Right cardiac atrium (tissue), 5 donors: ENCODE measurements at regions of chr2 and their contacts with region 1.

Region 1: DNA sequence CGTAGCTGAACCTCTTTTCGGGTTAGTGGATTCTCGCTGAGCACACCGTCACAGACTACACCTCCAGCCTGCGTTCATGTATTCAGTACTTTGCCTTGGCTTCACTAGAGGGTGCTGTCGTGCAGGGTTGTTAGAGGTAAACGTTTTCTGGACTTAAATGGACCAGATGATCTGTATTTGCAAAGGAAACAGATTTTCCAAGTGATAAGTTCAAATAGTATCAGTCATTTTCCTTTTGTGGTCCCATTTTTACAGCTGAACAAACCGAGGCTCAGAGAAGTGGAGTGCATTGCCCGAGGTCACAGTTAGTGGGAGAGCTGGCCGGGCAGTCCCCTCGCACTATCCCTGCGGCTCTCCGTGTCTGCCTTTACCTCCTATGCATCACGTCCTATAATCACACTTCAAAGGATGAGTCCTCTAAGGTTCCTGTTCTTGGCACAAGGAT is 125.9 kb downstream of the MAP4K4 start:
- DNase-seq: peak in 2 of 3 donors; percentile 47 to 57
- ATAC-seq: peak; percentile 65 to 70
- H3K4me3 ChIP-seq: no peak overlapping the region
- H3K27ac ChIP-seq: no peak overlapping the region
- H3K4me1 ChIP-seq: peaks cover 9% of the 10 kb centered on the region
- H3K27me3 ChIP-seq: no peaks in the 10 kb centered on the region

Region 2: DNA sequence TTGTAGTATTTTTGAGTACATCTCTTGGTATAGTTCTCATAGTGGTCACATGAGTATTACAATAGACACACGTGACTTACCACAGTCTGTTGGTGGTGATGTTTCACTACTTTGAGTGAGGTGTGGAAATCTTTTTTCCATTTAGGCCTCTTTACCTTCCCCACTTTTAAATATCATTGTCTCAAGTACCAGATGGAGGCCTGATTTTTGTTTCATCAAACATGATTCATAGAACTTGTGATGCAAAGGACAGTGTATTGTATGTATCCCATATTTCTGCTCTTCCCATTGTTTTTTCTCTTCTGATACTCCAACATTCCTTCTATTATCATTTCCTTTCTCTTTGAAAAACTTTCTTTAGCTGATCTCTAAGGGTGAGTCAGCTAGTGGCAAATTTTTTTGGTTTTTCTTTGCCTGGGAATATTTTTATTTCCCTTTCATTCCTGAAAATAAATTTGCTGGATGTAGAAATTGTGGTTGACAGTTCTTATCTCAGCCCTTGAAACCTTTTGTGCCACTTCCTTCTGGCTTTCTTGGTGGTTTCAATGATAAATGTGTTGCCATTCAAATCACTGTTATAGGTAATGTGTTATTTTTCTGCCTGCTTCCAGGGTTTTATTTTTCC is 381.2 kb before region 1 on chr2:
- intact Hi-C with region 1: no loop called
- DNase-seq: no peak
- ATAC-seq: no peak
- H3K4me3 ChIP-seq: no peak overlapping the region
- H3K27ac ChIP-seq: no peak overlapping the region
- H3K4me1 ChIP-seq: no peaks in the 10 kb centered on the region
- H3K27me3 ChIP-seq: no peaks in the 10 kb centered on the region

Region 3: DNA sequence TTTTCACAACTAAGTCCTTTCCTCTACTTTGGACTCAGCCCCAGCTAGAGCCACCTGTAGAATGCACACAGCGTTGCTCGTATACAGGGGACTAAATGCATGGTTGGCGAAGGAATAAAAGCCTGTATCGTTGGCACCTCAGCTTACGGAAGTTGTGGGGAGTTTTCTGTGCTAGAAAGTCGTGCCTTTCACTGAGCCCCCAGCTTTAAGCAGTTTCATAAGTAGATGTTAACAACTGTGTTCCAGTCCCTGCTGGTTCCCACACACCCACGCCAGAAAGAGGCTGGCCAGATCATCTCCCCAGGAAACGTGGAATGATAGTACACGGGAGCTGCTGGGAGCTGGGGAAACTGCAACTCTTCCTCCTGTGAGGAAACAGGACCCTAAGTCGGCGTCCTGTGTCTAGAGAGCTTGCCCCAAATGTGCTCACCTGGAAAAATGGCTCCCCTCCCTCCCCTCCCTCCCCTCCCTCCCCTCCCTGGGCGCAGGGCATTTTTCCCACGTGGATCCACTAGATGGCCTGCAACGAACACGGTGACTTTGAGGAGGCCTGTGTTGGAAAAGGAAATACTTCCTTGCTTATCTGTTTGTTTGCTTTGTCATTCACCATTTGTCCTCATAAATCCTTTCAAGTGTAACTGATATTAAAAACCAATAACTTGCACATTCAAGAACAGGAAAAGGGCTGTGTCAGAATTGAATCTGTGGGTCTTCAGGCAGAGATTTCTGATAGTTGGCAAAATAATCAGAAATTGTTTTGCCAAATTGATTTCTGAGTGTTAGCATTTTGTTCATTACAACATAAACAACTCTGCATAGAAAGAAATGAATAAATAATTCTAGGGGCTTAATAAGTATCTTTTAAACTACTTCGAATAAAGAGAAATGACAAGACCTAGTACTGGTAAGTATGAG is 304.5 kb before region 1 on chr2:
- intact Hi-C with region 1: loop called in 1 of 4 experiments (anchors 5 kb)
- DNase-seq: peak in 2 of 3 donors; percentile 69 to 72
- ATAC-seq: peak; percentile 69 to 77
- H3K4me3 ChIP-seq: no peak overlapping the region
- H3K27ac ChIP-seq: no peak overlapping the region
- H3K4me1 ChIP-seq: no peaks in the 10 kb centered on the region
- H3K27me3 ChIP-seq: no peaks in the 10 kb centered on the region

Region 4: GRCh38 chr2:101697124-101698013 is 126.0 kb before region 1 on chr2 and contains the start of gene MAP4K4:
- intact Hi-C with region 1: loop called in 2 of 4 experiments (anchors 10 kb)
- DNase-seq: peak; percentile 89 to 95 (median 94)
- ATAC-seq: peak; percentile 92 to 93
- H3K4me3 ChIP-seq: peak within 1 kb of the TSS; percentile 98
- H3K27ac ChIP-seq: peak within 1 kb of the TSS; percentile 87
- H3K4me1 ChIP-seq: peaks cover 2% of the 10 kb centered on the region
- H3K27me3 ChIP-seq: no peaks in the 10 kb centered on the region
- total RNA-seq, gene MAP4K4: 56.4 to 64.5 (median 61.8) TPM

Region 5: DNA sequence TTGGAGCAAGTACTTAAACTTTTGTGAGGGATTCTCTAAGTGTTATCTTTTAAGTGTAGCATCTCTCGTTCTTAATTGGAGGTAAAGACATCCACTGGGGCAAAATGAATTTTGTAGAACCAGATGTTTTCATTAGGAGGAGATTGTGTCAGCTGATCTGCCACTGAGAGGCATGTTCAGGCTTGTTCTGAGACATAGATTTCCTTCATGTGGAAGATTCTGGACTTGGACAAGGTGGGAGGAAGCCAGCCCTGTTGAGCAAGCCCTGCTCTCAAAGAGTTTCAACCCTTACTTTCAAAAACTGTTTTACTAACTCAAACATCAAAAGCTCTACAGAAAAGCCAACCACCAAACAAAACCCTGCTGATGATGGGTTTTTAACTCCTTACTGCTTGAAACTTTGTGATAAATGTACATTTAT is 119.3 kb before region 1 on chr2:
- intact Hi-C with region 1: loop called in 2 of 4 experiments (anchors 10 kb)
- DNase-seq: peak in 2 of 3 donors; percentile 48 to 73
- ATAC-seq: peak; percentile 56 to 77
- H3K4me3 ChIP-seq: no peak overlapping the region
- H3K27ac ChIP-seq: no peak overlapping the region
- H3K4me1 ChIP-seq: peaks cover 11% of the 10 kb centered on the region
- H3K27me3 ChIP-seq: no peaks in the 10 kb centered on the region

Region 6: GRCh38 chr2:101766871-101767739 is 56.3 kb before region 1 on chr2:
- intact Hi-C with region 1: loop called in 1 of 4 experiments (anchors 10 kb)
- DNase-seq: no peak
- ATAC-seq: peak in 1 of 2 donors; percentile 45
- H3K4me3 ChIP-seq: no peak overlapping the region
- H3K27ac ChIP-seq: peak overlapping the region; percentile 66
- H3K4me1 ChIP-seq: peaks cover 38% of the 10 kb centered on the region
- H3K27me3 ChIP-seq: no peaks in the 10 kb centered on the region

Region 7: DNA sequence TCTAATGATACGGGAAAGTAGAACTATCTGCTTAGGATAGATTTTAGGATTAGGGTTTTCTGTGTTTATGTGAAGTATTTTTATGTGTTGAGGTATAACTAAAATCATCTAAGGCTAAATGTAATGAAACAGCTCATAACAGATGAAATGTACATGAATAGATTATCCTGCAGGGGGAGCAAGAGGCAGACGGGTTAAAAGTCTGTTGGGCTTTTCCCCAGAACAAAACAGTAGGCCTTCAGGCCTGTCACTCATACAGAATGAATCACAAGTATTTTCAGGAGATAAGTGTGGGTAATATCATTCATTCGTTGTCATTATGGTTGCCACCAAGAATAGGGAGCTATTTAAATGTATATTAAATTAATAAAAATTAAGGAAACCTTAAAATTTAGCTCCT is 60.5 kb after region 1 on chr2:
- intact Hi-C with region 1: no loop called
- DNase-seq: no peak
- ATAC-seq: peak; percentile 63 to 69
- H3K4me3 ChIP-seq: no peak overlapping the region
- H3K27ac ChIP-seq: no peak overlapping the region
- H3K4me1 ChIP-seq: peaks cover 2% of the 10 kb centered on the region
- H3K27me3 ChIP-seq: no peaks in the 10 kb centered on the region

Region 8: GRCh38 chr2:102206666-102207341 is 383.4 kb after region 1 on chr2:
- intact Hi-C with region 1: no loop called
- DNase-seq: no peak
- ATAC-seq: peak; percentile 23 to 61
- H3K4me3 ChIP-seq: no peak overlapping the region
- H3K27ac ChIP-seq: no peak overlapping the region
- H3K4me1 ChIP-seq: no peaks in the 10 kb centered on the region
- H3K27me3 ChIP-seq: no peaks in the 10 kb centered on the region

Region 9: DNA sequence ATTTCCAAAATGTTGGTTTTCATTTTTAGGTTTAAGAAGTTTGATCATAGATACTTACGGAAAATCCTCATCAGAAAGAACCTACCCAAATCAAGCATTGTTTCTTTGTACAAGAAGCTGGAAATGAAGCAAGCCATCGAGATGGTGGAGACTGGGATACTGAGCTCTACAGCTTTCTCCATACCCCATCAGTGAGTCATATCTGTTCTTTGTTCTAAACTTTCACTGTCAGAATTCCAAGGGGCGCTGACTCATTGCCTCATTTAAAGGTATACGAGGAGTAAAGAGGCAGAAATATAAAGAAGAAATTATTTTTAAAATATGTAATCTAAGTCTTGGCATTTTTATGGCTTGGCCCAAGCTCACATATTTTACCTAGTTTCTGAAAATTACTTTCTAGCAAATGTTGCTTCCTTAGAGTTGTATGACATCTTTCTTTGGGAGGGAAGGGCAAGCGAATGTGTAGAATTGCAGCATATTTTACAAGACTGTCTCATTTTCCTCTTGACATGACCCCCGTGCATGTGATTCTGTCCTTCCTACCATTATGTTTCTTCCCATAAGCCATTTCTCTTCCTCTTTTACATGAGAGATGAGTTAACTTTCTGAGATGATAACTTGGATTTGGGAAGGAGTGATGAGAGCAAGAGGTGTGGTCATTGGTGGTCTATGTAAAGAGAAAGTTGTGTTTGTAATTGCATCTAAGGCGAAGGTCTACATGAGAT is 690.9 kb after region 1 on chr2:
- intact Hi-C with region 1: no loop called
- DNase-seq: no peak
- ATAC-seq: no peak
- H3K4me3 ChIP-seq: no peak overlapping the region
- H3K27ac ChIP-seq: no peak overlapping the region
- H3K4me1 ChIP-seq: no peaks in the 10 kb centered on the region
- H3K27me3 ChIP-seq: no peaks in the 10 kb centered on the region